K562 (cell line): ENCODE measurements at regions of chr7 and their contacts with region 1.

Region 1: DNA sequence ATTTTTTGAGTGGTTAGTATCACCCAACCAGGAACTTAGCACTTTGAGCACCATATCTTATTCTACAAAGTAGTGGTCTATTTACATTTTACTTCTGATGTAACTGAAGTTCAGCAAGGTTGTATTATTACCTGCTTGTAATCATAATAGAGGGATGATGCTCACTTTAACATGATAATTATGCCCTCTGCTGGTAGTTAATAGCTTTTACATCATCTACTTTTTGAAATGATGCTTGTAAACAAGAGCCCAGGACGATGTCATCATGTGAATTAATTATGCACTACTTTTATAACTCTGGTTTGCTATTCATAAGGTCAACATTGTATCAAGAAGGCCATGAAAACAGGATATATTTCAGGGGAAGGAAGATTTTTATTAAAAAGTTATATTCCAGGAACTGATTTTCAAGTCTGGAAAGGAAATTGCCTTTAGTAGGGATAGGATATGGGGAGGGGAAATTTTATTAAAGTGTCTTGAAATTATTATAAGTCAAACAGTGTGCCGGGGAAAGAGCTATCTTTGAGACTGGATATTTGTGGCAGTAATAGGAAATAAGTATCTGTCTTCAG is 80.3 kb upstream of the SCIN start:
- DNase-seq: peak; percentile 27 to 42 (median 30)
- ATAC-seq: peak; percentile 77
- H3K4me3 ChIP-seq: no peak overlapping the region
- H3K27ac ChIP-seq: no peak overlapping the region
- H3K4me1 ChIP-seq: 0 out of 5 replicates have a peak, but pooled peaks cover 0 to 3% of the 10 kb centered on the region in 2 experiments
- H3K27me3 ChIP-seq: no peaks in the 10 kb centered on the region
- CTCF ChIP-seq: peak; percentile 30 to 73 (median 57); a peak in 4 of 6 replicates
- EP300 ChIP-seq: no peak
- POLR2A ChIP-seq: no peak
- RAD21 ChIP-seq: peak; percentile 80 to 90

Region 2: DNA sequence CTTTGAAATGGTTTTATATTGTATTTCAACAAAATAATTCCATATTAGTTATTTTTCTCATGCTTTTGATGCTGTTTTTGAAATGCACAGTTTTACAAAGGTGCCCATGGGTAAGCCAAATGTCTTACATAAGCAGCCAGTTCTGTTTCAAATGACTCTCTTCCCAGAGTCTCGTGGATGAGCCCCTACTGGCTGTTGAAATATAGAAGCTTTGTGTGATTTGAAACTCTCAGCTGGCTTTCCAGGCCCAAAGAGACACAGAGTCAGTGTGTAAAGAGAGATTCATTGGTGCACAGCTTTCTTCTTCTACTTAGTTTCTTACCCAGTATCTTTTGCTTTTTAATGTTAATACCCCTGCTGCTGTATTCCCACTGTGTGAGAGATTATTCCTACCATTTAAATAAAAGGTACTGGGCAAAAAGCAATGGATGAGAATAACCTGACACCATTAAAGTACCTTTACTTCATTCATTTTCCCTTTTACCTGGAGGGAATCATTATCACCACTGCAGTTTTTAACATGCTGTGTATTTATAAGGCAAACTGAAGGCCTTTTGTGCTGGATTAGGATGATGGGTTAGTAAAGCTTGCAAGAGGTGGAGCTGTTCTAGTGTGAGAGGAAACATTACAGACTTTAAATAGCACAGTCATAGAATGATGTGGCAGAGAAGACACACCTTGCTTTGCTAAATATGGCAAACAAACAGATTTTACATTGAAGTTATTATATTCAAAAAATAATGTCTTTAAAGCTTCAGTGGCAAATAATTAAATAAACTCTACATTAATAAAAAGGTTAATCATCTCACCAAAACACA is 1073.4 kb before region 1 on chr7:
- CTCF ChIA-PET with region 1: no interaction called
- POLR2A ChIA-PET with region 1: no interaction called
- in situ Hi-C with region 1: loop called (anchors 25 kb)
- intact Hi-C with region 1: no loop called
- DNase-seq: no peak
- ATAC-seq: no peak
- H3K4me3 ChIP-seq: no peak overlapping the region
- H3K27ac ChIP-seq: no peak overlapping the region
- H3K4me1 ChIP-seq: no peaks in the 10 kb centered on the region
- H3K27me3 ChIP-seq: no peaks in the 10 kb centered on the region
- CTCF ChIP-seq: no peak
- EP300 ChIP-seq: no peak
- POLR2A ChIP-seq: no peak
- RAD21 ChIP-seq: no peak

Region 3: GRCh38 chr7:12211054-12211710 is 279.0 kb before region 1 on chr7 and contains the start of gene TMEM106B:
- CTCF ChIA-PET with region 1: no interaction called
- POLR2A ChIA-PET with region 1: no interaction called
- in situ Hi-C with region 1: no loop called
- intact Hi-C with region 1: loop called (anchors 5 kb)
- DNase-seq: peak; percentile 95 to 98 (median 96)
- ATAC-seq: peak; percentile 97
- H3K4me3 ChIP-seq: peak within 1 kb of the TSS; percentile 70
- H3K27ac ChIP-seq: peak within 1 kb of the TSS; percentile 85
- H3K4me1 ChIP-seq: peaks cover 5 to 7% of the 10 kb centered on the region in 2 experiments; a peak in 2 of 5 replicates
- H3K27me3 ChIP-seq: no peaks in the 10 kb centered on the region; a peak in 1 of 5 replicates
- CTCF ChIP-seq: peak in 1 of 3 experiments; percentile 4; a peak in 1 of 6 replicates
- EP300 ChIP-seq: no peak
- POLR2A ChIP-seq: peak; percentile 84
- RAD21 ChIP-seq: no peak; a peak in 1 of 4 replicates
- polyA plus RNA-seq, gene TMEM106B: 8.6 to 8.9 TPM

Region 4: GRCh38 chr7:12389089-12389700 is 101.0 kb before region 1 on chr7:
- CTCF ChIA-PET with region 1: interaction called, 3 read pairs
- POLR2A ChIA-PET with region 1: interaction called, 3 read pairs
- in situ Hi-C with region 1: no loop called
- intact Hi-C with region 1: loop called (anchors 5 kb)
- DNase-seq: peak; percentile 37 to 79 (median 54)
- ATAC-seq: peak; percentile 57
- H3K4me3 ChIP-seq: no peak overlapping the region
- H3K27ac ChIP-seq: no peak overlapping the region
- H3K4me1 ChIP-seq: peaks cover 8 to 37% of the 10 kb centered on the region in 2 experiments
- H3K27me3 ChIP-seq: no peaks in the 10 kb centered on the region
- CTCF ChIP-seq: peak; percentile 67 to 95 (median 76)
- EP300 ChIP-seq: no peak
- POLR2A ChIP-seq: no peak
- RAD21 ChIP-seq: peak in 1 of 2 experiments; percentile 52; a peak in 2 of 4 replicates

Region 5: DNA sequence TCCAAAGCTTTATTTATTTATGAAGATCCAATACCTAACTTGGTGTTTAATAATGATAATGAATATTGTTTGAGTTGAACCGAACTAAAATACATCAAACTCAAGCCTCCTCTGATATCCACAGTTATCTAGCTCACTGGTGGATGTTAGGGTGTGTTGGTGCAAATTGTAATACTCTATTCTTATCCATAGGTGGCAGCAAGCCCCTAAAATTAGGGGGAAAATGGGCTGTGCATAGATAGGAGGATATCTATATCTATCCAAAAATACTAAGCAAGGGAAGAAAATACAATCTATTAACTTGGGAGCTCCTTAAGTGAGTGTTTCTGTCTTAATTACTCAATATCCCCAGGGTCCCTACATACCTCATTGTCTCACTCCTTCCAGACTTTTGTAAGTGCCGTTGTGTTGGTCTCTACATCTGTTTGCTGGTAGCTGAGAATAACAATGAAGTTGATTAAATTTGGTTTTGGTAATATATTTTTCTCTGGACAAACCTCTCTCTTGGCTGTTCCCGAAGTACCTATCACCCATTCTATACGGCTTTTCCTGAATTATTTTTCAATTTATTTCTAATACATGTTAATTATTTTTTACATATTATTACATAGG is 31.6 kb before region 1 on chr7:
- CTCF ChIA-PET with region 1: interaction called, 33 read pairs
- POLR2A ChIA-PET with region 1: interaction called, 10 read pairs
- in situ Hi-C with region 1: loop called (anchors 5 kb)
- intact Hi-C with region 1: loop called (anchors 1 kb)
- DNase-seq: peak; percentile 40 to 71 (median 56)
- ATAC-seq: peak; percentile 99
- H3K4me3 ChIP-seq: no peak overlapping the region
- H3K27ac ChIP-seq: no peak overlapping the region
- H3K4me1 ChIP-seq: no peaks in the 10 kb centered on the region
- H3K27me3 ChIP-seq: no peaks in the 10 kb centered on the region
- CTCF ChIP-seq: peak; percentile 74 to 89 (median 78)
- EP300 ChIP-seq: no peak
- POLR2A ChIP-seq: no peak
- RAD21 ChIP-seq: peak; percentile 79 to 93